IMR-90 (cell line): ENCODE measurements at regions of chr2 and their contacts with region 1.

Region 1: DNA sequence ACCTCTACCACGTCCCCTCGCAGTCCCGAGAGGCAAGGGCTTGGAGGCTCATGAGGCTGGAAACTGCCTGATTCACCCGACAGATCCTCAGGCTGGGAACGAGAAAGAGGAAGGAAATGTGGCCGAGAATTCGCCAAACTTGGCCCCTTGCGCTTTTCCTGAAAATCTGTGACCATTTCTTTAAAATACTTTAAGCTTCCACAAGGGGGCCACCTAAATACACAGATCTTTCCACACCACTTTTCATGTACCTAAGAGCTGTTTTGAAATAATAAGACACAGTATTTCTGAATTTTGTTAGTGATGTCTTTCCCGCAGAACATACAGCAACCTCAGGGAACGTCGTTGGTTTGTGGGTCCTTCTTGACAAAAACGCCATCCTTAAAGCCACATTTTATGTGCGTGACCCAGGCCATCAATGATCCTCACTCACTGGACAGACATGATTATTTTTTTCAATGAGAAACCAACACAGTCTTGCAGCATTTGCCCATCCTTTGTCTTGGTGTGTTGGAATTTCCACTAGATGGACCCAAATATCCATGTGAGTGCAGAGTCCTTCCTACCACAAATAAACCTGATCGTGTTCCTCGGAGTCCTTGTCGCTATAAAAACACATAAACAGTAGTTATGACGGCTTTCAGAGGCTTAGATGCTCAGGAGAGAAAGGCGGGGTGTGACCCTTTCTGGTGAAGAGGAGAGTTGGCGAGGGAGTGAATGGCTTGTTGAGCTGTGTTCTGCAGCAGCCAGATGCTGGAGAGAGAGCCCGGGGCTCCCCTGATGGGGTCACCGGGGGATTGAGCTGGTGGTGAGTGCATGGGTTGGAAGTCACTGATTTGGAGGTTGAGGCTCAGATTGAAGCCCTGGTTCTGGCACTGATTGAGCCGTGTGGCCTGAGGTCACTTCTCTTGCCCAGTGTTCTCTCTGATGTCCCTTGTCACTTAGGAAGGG is 25.0 kb downstream of the DCDC2C start:
- DNase-seq: peak; percentile 67
- ATAC-seq: peak; percentile 79
- H3K4me3 ChIP-seq: no peak overlapping the region
- H3K27ac ChIP-seq: no peak overlapping the region
- H3K4me1 ChIP-seq: no peaks in the 10 kb centered on the region
- H3K27me3 ChIP-seq: peaks cover 12% of the 10 kb centered on the region
- CTCF ChIP-seq: peak; percentile 67
- POLR2A ChIP-seq: no peak
- RAD21 ChIP-seq: peak; percentile 66

Region 2: DNA sequence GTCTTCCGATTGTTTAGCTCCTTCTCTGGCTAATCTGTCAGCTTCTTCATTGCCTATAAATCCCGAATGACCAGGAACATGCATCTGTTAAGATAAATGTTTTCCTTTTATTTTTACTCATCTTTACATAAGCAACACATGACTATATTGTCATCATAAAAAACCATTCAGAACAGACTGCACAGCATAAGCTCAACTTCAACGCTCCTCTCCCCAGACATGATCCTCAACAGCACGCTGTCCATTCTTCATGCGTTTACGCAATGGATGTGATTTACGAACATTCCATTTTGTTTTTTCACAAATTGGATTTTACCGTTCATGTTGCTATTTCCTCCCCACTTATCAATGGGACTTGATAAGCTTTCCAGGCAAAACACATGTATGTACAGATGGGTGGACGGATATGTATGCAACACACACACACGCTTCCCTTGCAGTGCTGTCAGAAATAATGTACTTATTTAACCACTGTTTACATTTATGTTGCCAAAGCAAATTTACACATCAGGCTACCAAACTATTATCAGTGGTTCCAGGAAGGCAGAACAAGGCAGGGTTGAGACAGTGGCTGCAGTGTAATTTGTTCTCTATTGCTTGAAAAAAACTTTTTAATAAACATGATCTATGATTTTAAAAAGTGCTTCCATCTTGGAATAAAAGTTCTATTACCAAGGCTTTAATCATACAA is 182.4 kb before region 1 on chr2:
- CTCF ChIA-PET with region 1: no interaction called
- POLR2A ChIA-PET with region 1: no interaction called
- dilution Hi-C with region 1: no loop called
- in situ Hi-C with region 1: no loop called
- intact Hi-C with region 1: no loop called
- DNase-seq: no peak
- ATAC-seq: no peak
- H3K4me3 ChIP-seq: no peak overlapping the region
- H3K27ac ChIP-seq: no peak overlapping the region
- H3K4me1 ChIP-seq: no peaks in the 10 kb centered on the region
- H3K27me3 ChIP-seq: no peaks in the 10 kb centered on the region
- CTCF ChIP-seq: no peak
- POLR2A ChIP-seq: no peak
- RAD21 ChIP-seq: no peak

Region 3: GRCh38 chr2:3604991-3605961 is 123.1 kb before region 1 on chr2:
- CTCF ChIA-PET with region 1: no interaction called
- POLR2A ChIA-PET with region 1: no interaction called
- dilution Hi-C with region 1: no loop called
- in situ Hi-C with region 1: no loop called
- intact Hi-C with region 1: no loop called
- DNase-seq: no peak
- ATAC-seq: no peak
- H3K4me3 ChIP-seq: no peak overlapping the region
- H3K27ac ChIP-seq: no peak overlapping the region
- H3K4me1 ChIP-seq: peaks cover 1% of the 10 kb centered on the region; the same call in 1 of the 2 replicates
- H3K27me3 ChIP-seq: peaks cover 4% of the 10 kb centered on the region; the same call in 1 of the 2 replicates
- CTCF ChIP-seq: no peak
- POLR2A ChIP-seq: no peak
- RAD21 ChIP-seq: no peak

Region 4: GRCh38 chr2:3677436-3677835 is 50.9 kb before region 1 on chr2:
- CTCF ChIA-PET with region 1: no interaction called
- POLR2A ChIA-PET with region 1: no interaction called
- dilution Hi-C with region 1: no loop called
- in situ Hi-C with region 1: no loop called
- intact Hi-C with region 1: no loop called
- DNase-seq: no peak
- ATAC-seq: no peak
- H3K4me3 ChIP-seq: no peak overlapping the region
- H3K27ac ChIP-seq: no peak overlapping the region
- H3K4me1 ChIP-seq: no peaks in the 10 kb centered on the region
- H3K27me3 ChIP-seq: peaks cover 8% of the 10 kb centered on the region
- CTCF ChIP-seq: no peak
- POLR2A ChIP-seq: no peak
- RAD21 ChIP-seq: no peak

Region 5: GRCh38 chr2:3692381-3692780 is 36.0 kb before region 1 on chr2:
- CTCF ChIA-PET with region 1: interaction called, 6 read pairs
- POLR2A ChIA-PET with region 1: no interaction called
- dilution Hi-C with region 1: no loop called
- in situ Hi-C with region 1: no loop called
- intact Hi-C with region 1: loop called (anchors 1 kb)
- DNase-seq: peak; percentile 31
- ATAC-seq: peak; percentile 85
- H3K4me3 ChIP-seq: no peak overlapping the region
- H3K27ac ChIP-seq: no peak overlapping the region
- H3K4me1 ChIP-seq: no peaks in the 10 kb centered on the region
- H3K27me3 ChIP-seq: peaks cover 11% of the 10 kb centered on the region
- CTCF ChIP-seq: peak; percentile 58
- POLR2A ChIP-seq: no peak
- RAD21 ChIP-seq: peak; percentile 62

Region 6: DNA sequence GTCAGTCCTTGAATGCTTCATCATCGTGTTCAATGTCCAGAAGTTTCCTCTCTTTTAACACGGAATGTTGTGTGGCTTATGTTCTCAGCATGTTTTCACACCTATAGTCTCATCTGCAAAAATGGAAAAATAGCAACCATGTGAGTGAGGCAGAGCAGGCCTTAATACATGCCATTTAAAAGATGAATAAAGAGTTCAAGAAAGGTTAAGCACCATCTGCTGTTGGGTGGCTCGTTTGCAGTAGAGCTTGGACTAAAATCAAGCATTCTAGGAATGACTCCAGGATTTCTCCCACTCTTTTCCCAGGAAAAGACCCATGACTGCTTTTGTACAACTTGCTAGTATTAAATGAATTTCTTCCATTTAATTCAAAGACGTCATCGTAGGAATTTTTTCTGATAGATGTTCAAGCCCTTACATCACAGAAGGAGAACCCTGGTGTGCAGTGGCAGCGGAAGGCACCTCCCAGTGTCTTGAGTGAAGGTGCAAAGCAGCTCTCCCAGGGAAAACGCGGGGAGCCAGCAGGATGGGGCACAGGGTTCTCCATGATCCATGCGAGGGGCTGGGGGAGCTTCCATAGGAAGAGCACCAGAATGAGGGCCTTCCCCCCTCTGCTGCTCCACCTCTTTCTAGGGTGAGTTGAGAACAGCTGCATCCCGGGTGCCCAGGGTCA is 15.4 kb before region 1 on chr2:
- CTCF ChIA-PET with region 1: interaction called, 14 read pairs
- POLR2A ChIA-PET with region 1: no interaction called
- dilution Hi-C with region 1: no loop called
- in situ Hi-C with region 1: no loop called
- intact Hi-C with region 1: no loop called
- DNase-seq: peak; percentile 66
- ATAC-seq: peak; percentile 76
- H3K4me3 ChIP-seq: no peak overlapping the region
- H3K27ac ChIP-seq: peak overlapping the region; percentile 37; the same call in 1 of the 2 replicates
- H3K4me1 ChIP-seq: peaks cover 4% of the 10 kb centered on the region; the same call in 1 of the 2 replicates
- H3K27me3 ChIP-seq: peaks cover under 1% of the 10 kb centered on the region; the same call in 1 of the 2 replicates
- CTCF ChIP-seq: no peak
- POLR2A ChIP-seq: no peak
- RAD21 ChIP-seq: no peak

Region 7: DNA sequence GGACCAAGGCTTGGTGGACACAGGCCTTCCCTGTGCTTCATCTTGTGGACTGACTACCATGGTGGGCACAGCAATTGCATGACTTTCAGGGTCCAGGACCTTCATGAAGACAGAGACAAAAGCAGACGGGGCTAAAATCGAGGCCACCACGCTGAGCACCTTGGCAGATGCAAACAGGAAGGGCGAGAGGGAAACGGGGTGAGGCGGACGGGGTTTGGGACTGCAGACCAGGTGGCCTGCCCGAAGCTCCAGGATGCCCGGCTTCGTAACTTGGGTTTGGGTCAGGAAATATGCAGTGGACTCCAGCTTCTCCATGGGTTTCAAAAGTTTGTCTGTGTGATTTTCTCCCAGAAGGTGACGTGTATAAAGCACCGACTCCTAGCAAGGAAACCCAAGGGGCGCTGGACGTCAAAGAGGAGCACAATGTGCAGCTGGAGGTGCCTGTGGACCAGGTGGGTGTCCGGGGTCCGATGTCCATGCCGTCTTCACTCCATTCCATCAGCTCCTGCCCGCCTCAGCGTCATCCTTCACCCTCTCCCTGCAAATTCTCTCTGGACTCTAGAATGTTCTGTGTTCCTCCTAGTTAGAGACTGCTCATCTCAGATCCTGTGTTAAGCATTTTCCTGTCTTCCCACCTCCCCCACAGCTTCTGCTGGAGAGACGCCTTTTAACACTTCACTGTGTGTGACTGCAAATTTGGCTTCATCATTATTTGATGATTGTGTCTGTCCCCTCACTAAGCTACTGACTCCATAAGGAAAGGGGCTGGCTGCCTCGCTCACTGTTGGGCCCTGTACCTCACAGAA is 40.8 kb after region 1 on chr2:
- CTCF ChIA-PET with region 1: no interaction called
- POLR2A ChIA-PET with region 1: no interaction called
- dilution Hi-C with region 1: no loop called
- in situ Hi-C with region 1: no loop called
- intact Hi-C with region 1: no loop called
- DNase-seq: no peak
- ATAC-seq: peak; percentile 65
- H3K4me3 ChIP-seq: no peak overlapping the region
- H3K27ac ChIP-seq: peak overlapping the region; percentile 25; the same call in 1 of the 2 replicates
- H3K4me1 ChIP-seq: peaks cover 4% of the 10 kb centered on the region; the same call in 1 of the 2 replicates
- H3K27me3 ChIP-seq: no peaks in the 10 kb centered on the region
- CTCF ChIP-seq: no peak
- POLR2A ChIP-seq: no peak
- RAD21 ChIP-seq: no peak

Region 8: GRCh38 chr2:3780477-3781402 is 52.4 kb after region 1 on chr2:
- CTCF ChIA-PET with region 1: interaction called, 41 read pairs
- POLR2A ChIA-PET with region 1: no interaction called
- dilution Hi-C with region 1: no loop called
- in situ Hi-C with region 1: no loop called
- intact Hi-C with region 1: loop called (anchors 2 kb)
- DNase-seq: peak; percentile 73
- ATAC-seq: peak; percentile 95
- H3K4me3 ChIP-seq: no peak overlapping the region
- H3K27ac ChIP-seq: 0 out of 2 replicates have a peak overlapping the region, but pooled peaks have one; percentile 20
- H3K4me1 ChIP-seq: peaks cover 6% of the 10 kb centered on the region
- H3K27me3 ChIP-seq: no peaks in the 10 kb centered on the region
- CTCF ChIP-seq: peak; percentile 71
- POLR2A ChIP-seq: no peak
- RAD21 ChIP-seq: peak; percentile 65

Region 9: GRCh38 chr2:3827673-3828575 is 99.5 kb after region 1 on chr2:
- CTCF ChIA-PET with region 1: interaction called, 11 read pairs
- POLR2A ChIA-PET with region 1: no interaction called
- dilution Hi-C with region 1: no loop called
- in situ Hi-C with region 1: loop called (anchors 5 kb)
- intact Hi-C with region 1: loop called (anchors 1 kb)
- DNase-seq: peak; percentile 36
- ATAC-seq: peak; percentile 82
- H3K4me3 ChIP-seq: no peak overlapping the region
- H3K27ac ChIP-seq: no peak overlapping the region
- H3K4me1 ChIP-seq: no peaks in the 10 kb centered on the region
- H3K27me3 ChIP-seq: peaks cover 6% of the 10 kb centered on the region
- CTCF ChIP-seq: peak; percentile 71
- POLR2A ChIP-seq: no peak
- RAD21 ChIP-seq: peak; percentile 64